Naive thymus-derived CD4-positive, alpha-beta T cell (primary cell): ENCODE measurements at regions of chr16 and their contacts with region 1.

Region 1: GRCh38 chr16:4846891-4847773 is at the starts of genes GLYR1 and UBN1:
- DNase-seq: peak; percentile 99 to 100 (median 99)
- ATAC-seq: peak; percentile 95
- H3K4me3 ChIP-seq: peak within 1 kb of the TSS; percentile 84
- H3K4me3 Mint-ChIP-seq: peak within 1 kb of the TSS; percentile 86 to 96 (median 91)
- H3K27ac ChIP-seq: peak within 1 kb of the TSS; percentile 99
- H3K27ac Mint-ChIP-seq: peak within 1 kb of the TSS; percentile 74 to 94 (median 90)
- H3K4me1 ChIP-seq: peaks cover 30 to 38% of the 10 kb centered on the region in 2 donors
- H3K4me1 Mint-ChIP-seq: peaks cover 52 to 66% (median 58%) of the 10 kb centered on the region in 7 donors
- H3K27me3 ChIP-seq: no peaks in the 10 kb centered on the region
- H3K27me3 Mint-ChIP-seq: no peaks in the 10 kb centered on the region
- total RNA-seq, gene GLYR1: 98.7 to 122 (median 108) TPM
- total RNA-seq, gene UBN1: 39.5 to 58.7 (median 42.4) TPM

Region 2: DNA sequence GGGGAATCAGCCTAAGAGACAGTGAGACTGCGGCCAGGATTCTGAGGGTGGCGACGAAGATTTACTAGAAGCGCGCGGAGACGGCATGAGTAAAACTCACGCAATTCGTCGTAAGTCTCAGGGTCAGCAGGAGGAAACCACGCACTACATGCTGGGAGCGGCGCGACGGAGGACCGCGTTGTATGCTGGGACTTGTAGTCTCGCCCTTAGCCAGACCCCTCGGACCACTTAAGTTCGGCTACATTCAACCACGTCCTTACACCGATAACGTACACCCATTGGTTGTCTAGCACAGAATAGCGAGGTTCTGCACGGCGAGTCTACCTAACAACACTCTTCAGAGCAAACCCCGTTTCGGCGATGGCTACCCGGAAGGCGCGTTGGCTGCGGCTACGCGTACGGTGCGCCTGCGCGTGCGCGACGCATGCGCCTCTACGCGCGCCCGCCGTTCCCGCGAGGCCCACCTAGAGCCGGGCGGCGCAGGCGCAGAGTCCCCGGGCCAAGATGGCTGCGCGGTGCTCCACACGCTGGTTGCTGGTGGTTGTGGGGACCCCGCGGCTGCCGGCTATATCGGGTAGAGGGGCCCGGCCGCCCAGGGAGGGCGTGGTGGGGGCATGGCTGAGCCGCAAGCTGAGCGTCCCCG is 421.6 kb before region 1 on chr16 and contains the start of gene DNAJA3:
- CTCF ChIA-PET with region 1: no interaction called
- POLR2A ChIA-PET with region 1: no interaction called
- intact Hi-C with region 1: loop called in 1 of 2 experiments (anchors 5 kb)
- DNase-seq: peak; percentile 91 to 97 (median 95)
- ATAC-seq: peak; percentile 93
- H3K4me3 ChIP-seq: peak within 1 kb of the TSS; percentile 97
- H3K4me3 Mint-ChIP-seq: peak within 1 kb of the TSS; percentile 92 to 99 (median 98)
- H3K27ac ChIP-seq: peak within 1 kb of the TSS; percentile 95
- H3K27ac Mint-ChIP-seq: peak within 1 kb of the TSS; percentile 99 to 100 (median 100)
- H3K4me1 ChIP-seq: peaks cover 18% of the 10 kb centered on the region in 2 donors
- H3K4me1 Mint-ChIP-seq: peaks cover 26 to 37% (median 31%) of the 10 kb centered on the region in 7 donors
- H3K27me3 ChIP-seq: no peaks in the 10 kb centered on the region
- H3K27me3 Mint-ChIP-seq: peaks cover 0 to 4% (median 0%) of the 10 kb centered on the region in 5 donors
- total RNA-seq, gene DNAJA3: 33.6 to 79.8 (median 70.5) TPM

Region 3: GRCh38 chr16:4734063-4734729 is 112.9 kb before region 1 on chr16 and contains the starts of genes ANKS3 and DNAAF8:
- CTCF ChIA-PET with region 1: interaction called, 3 read pairs
- POLR2A ChIA-PET with region 1: interaction called, 24 read pairs
- intact Hi-C with region 1: loop called (anchors 1 kb)
- DNase-seq: peak; percentile 72 to 90 (median 79)
- ATAC-seq: peak; percentile 86
- H3K4me3 ChIP-seq: peak within 1 kb of the TSS; percentile 98
- H3K4me3 Mint-ChIP-seq: peak within 1 kb of the TSS; percentile 84 to 96 (median 92)
- H3K27ac ChIP-seq: peak within 1 kb of the TSS; percentile 79
- H3K27ac Mint-ChIP-seq: peak within 1 kb of the TSS; percentile 73 to 92 (median 90)
- H3K4me1 ChIP-seq: peaks cover 6 to 9% of the 10 kb centered on the region in 2 donors
- H3K4me1 Mint-ChIP-seq: peaks cover 9 to 32% (median 20%) of the 10 kb centered on the region in 7 donors
- H3K27me3 ChIP-seq: no peaks in the 10 kb centered on the region
- H3K27me3 Mint-ChIP-seq: peaks cover 0 to 3% (median 0%) of the 10 kb centered on the region in 5 donors
- total RNA-seq, gene ANKS3: 17.6 to 32.7 (median 25.3) TPM
- total RNA-seq, gene DNAAF8: 0.11 to 0.57 (median 0.27) TPM

Region 4: DNA sequence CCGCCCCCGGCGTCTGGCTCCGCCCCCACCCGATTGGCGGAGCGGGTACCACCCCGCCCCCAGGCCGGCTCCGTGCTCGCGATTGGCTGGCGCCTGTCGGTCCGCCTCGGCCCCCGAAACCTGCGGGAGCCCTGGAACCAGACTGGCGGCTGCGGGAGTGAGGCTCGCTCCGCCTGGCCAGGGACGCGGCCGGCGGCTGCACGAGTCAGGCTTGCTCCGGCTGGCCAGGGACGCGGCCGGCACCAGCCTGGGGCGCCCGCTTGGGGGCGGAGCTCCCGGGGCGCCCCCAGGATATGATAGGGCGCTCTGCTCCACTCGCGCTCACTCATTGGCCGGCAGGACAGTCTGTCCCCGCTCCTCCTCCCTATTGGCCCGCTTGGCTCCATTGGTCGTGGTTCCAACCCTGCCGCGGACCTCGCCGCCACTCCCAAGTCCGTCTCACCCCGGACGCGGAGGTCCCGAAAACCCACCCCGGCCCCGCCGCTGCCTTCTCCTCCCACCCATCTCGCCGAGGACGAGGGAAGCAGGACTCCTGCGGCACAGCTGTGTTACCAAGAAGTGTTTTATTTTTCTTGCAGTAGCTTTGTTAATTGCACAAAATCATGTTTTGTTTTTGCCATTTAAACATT is 44.4 kb before region 1 on chr16:
- CTCF ChIA-PET with region 1: no interaction called
- POLR2A ChIA-PET with region 1: interaction called, 11 read pairs
- intact Hi-C with region 1: loop called (anchors 1 kb)
- DNase-seq: peak; percentile 82 to 97 (median 93)
- ATAC-seq: peak; percentile 93
- H3K4me3 ChIP-seq: peak overlapping the region; percentile 79
- H3K4me3 Mint-ChIP-seq: peak overlapping the region; percentile 81 to 86 (median 86)
- H3K27ac ChIP-seq: peak overlapping the region; percentile 60
- H3K27ac Mint-ChIP-seq: peak overlapping the region in 8 of 9 donors; percentile 36 to 84 (median 74)
- H3K4me1 ChIP-seq: peaks cover 10 to 18% of the 10 kb centered on the region in 2 donors
- H3K4me1 Mint-ChIP-seq: peaks cover 7 to 19% (median 12%) of the 10 kb centered on the region in 7 donors
- H3K27me3 ChIP-seq: no peaks in the 10 kb centered on the region
- H3K27me3 Mint-ChIP-seq: no peaks in the 10 kb centered on the region

Region 5: DNA sequence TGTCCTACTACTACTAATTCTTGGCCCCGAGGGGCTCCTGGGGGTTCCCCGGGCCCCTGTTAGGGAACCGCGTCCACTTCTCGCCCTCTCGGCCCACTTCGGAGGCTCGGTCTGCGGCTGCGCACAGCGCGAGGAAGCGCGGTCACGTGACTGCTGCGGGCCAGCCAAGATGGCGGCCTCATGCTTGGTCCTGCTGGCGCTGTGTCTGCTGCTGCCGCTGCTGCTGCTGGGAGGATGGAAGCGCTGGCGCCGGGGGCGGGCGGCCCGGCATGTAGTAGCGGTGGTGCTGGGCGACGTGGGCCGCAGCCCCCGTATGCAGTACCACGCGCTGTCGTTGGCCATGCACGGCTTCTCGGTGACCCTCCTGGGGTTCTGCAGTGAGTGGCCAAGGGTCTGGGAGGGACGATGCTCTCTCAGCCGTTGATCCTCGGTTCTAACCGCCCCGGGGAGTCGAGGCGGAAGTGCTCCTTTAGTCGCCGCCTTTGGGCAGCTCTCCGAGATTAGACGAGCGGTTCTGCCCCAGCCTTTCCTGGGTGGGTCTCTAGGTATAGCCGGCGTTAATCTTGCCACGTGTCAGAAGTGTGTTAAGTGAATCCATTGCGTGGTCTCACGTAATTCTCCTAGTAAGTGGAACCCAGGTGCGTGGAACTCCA is 224.7 kb after region 1 on chr16 and contains the start of gene ALG1:
- CTCF ChIA-PET with region 1: no interaction called
- POLR2A ChIA-PET with region 1: no interaction called
- intact Hi-C with region 1: loop called in 1 of 2 experiments (anchors 5 kb)
- DNase-seq: peak; percentile 80 to 91 (median 87)
- ATAC-seq: peak; percentile 95
- H3K4me3 ChIP-seq: peak within 1 kb of the TSS; percentile 92
- H3K4me3 Mint-ChIP-seq: peak within 1 kb of the TSS; percentile 82 to 98 (median 95)
- H3K27ac ChIP-seq: peak within 1 kb of the TSS; percentile 77
- H3K27ac Mint-ChIP-seq: peak within 1 kb of the TSS; percentile 92 to 99 (median 96)
- H3K4me1 ChIP-seq: peaks cover 15 to 17% of the 10 kb centered on the region in 2 donors
- H3K4me1 Mint-ChIP-seq: peaks cover 23 to 44% (median 32%) of the 10 kb centered on the region in 7 donors
- H3K27me3 ChIP-seq: no peaks in the 10 kb centered on the region
- H3K27me3 Mint-ChIP-seq: peaks cover 0 to 3% (median 0%) of the 10 kb centered on the region in 5 donors
- total RNA-seq, gene ALG1: 12.9 to 29.1 (median 22.1) TPM